Activated CD4-positive, alpha-beta T cell treated with anti-CD3 and anti-CD28 coated beads, Interleukin-2, amount 10 ng/mL, durations not matched to agents 24 days and 14 days (primary cell): ENCODE measurements at regions of chr10 and their contacts with region 1.

Region 1: GRCh38 chr10:104121520-104122224 is at the start of gene SFR1:
- DNase-seq: peak; percentile 100
- H3K4me3 Mint-ChIP-seq: peak within 1 kb of the TSS; percentile 93
- H3K27ac Mint-ChIP-seq: peak within 1 kb of the TSS; percentile 100
- H3K4me1 Mint-ChIP-seq: peaks cover 34% of the 10 kb centered on the region
- H3K27me3 Mint-ChIP-seq: peaks cover 10% of the 10 kb centered on the region
- total RNA-seq, gene SFR1: 12.1 and 13.8 TPM in 2 replicates

Region 2: DNA sequence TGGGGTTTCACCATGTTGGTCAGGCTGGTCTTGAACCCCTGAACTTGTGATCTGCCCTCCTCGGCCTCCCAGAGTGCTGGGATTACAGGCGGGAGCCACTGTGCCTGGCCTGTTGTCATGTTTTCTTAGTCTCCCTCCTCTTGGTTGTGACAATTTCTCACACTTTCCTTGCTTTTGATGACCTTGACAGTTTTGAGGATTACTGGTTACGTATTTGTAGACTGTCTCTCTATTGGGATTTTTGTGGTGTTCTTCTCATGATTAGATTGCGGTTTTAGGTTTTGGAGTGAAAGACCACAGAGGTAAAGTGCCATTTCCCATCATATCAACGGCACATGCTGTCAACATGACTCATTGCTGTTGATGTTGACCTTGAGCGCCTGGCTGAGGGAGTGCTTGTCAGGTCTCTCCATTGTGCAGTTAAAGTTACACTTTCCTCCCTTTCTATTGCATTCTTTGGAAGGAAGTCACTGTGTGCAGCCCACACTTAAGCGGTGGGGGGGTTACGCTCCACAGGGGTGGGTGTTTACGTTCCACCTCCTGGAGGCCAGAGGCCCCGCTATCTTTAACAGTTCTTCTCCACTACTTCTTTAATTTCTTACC is 617.4 kb before region 1 on chr10:
- intact Hi-C with region 1: no loop called
- DNase-seq: peak; percentile 84
- H3K4me3 Mint-ChIP-seq: peak overlapping the region; percentile 53
- H3K27ac Mint-ChIP-seq: peak overlapping the region; percentile 59
- H3K4me1 Mint-ChIP-seq: peaks cover 31% of the 10 kb centered on the region
- H3K27me3 Mint-ChIP-seq: peaks cover 59% of the 10 kb centered on the region

Region 3: DNA sequence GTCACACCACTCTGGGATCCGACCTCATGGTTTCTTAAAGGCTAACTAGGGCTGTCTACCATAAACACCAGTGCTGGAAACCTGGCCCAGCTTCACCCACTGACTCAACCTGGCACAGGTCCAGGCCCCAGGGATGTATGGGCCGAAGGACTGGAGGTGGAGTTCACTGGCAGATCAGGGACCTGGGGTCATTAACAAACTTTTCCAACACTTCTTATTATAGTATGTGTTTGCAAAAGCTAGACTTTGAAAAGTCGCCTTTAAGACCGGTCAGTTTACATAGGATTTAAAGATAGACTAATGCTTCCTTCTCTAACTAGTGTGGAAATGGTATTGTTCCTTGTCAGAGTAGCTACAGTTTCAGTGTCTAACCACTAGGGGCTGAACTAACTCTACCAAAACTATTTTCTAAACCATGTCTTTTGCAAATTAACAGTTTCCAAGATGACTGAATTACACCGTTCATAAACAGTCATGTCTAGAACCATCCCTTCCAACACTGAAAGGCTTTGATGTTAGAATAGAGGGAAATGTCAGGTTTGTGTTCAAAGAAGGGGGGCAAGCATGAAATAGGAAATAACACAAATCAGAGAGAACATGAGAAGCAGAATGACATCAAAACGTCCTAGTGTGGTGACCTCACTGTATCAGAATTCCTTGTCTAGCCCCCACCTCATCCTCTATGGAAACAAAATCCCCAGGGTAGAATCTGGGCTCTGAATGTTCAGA is 233.4 kb before region 1 on chr10:
- intact Hi-C with region 1: loop called (anchors 1 kb)
- DNase-seq: peak; percentile 70
- H3K4me3 Mint-ChIP-seq: no peak overlapping the region
- H3K27ac Mint-ChIP-seq: peak overlapping the region; percentile 76
- H3K4me1 Mint-ChIP-seq: peaks cover 28% of the 10 kb centered on the region
- H3K27me3 Mint-ChIP-seq: no peaks in the 10 kb centered on the region

Region 4: GRCh38 chr10:103918053-103918846 is 203.4 kb before region 1 on chr10 and contains the start of gene STN1:
- intact Hi-C with region 1: loop called (anchors 1 kb)
- DNase-seq: peak; percentile 98
- H3K4me3 Mint-ChIP-seq: peak within 1 kb of the TSS; percentile 97
- H3K27ac Mint-ChIP-seq: peak within 1 kb of the TSS; percentile 97
- H3K4me1 Mint-ChIP-seq: peaks cover 33% of the 10 kb centered on the region
- H3K27me3 Mint-ChIP-seq: no peaks in the 10 kb centered on the region
- total RNA-seq, gene STN1: 23.6 and 24.1 TPM in 2 replicates

Region 5: GRCh38 chr10:104080762-104081161 is 40.9 kb before region 1 on chr10:
- intact Hi-C with region 1: loop called (anchors 5 kb)
- DNase-seq: no peak
- H3K4me3 Mint-ChIP-seq: no peak overlapping the region
- H3K27ac Mint-ChIP-seq: no peak overlapping the region
- H3K4me1 Mint-ChIP-seq: no peaks in the 10 kb centered on the region
- H3K27me3 Mint-ChIP-seq: peaks cover 7% of the 10 kb centered on the region

Region 6: DNA sequence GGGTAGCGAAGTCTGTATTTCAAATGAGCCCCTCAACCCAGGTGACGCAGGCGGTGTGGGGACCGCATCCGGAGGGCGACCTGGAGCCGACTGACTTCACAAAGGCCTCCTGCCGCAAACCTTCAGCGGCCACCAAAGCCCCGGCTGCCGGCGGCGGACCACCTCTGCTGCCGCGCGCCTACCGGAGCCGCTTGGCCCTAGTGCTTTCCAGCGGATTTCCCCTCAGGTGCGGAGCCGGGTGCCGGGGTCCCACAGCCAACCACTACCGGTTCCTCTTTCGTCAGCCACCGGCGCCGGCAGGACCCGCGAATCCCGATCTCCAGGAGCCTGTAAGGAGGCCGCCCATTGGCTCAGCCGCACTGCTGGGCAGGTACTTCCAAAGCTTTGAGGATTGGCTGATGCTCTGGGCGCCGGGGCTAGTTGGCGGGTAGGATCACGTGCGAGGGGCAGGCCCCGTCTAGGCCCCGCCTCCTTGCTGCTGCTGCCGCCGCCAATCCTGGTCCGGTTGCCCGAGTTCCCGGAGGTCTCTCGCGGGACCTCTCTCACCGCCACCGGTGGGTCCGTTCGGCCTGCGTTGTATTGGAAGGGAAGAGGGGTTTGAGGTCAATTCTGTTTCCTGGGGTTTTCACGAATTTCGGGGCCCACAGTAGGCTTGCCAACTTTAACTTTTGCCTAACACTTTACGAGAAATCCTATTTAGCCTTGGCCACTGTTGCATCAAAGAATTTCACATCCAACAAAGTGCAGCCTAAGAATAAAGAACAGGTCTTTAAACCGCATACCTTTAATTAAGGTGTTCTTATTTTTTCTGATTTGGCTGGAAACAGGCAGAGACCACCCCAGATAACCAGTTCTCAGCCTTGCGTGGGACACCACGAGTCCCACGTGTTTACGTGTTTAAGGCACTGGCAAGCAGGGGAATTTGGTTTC is 147.3 kb after region 1 on chr10 and contains the start of gene GSTO2:
- intact Hi-C with region 1: loop called (anchors 1 kb)
- DNase-seq: peak; percentile 99
- H3K4me3 Mint-ChIP-seq: peak within 1 kb of the TSS; percentile 87
- H3K27ac Mint-ChIP-seq: peak within 1 kb of the TSS; percentile 90
- H3K4me1 Mint-ChIP-seq: peaks cover 29% of the 10 kb centered on the region
- H3K27me3 Mint-ChIP-seq: peaks cover 2% of the 10 kb centered on the region
- total RNA-seq, gene GSTO2: 0.77 and 1.3 TPM in 2 replicates

Region 7: DNA sequence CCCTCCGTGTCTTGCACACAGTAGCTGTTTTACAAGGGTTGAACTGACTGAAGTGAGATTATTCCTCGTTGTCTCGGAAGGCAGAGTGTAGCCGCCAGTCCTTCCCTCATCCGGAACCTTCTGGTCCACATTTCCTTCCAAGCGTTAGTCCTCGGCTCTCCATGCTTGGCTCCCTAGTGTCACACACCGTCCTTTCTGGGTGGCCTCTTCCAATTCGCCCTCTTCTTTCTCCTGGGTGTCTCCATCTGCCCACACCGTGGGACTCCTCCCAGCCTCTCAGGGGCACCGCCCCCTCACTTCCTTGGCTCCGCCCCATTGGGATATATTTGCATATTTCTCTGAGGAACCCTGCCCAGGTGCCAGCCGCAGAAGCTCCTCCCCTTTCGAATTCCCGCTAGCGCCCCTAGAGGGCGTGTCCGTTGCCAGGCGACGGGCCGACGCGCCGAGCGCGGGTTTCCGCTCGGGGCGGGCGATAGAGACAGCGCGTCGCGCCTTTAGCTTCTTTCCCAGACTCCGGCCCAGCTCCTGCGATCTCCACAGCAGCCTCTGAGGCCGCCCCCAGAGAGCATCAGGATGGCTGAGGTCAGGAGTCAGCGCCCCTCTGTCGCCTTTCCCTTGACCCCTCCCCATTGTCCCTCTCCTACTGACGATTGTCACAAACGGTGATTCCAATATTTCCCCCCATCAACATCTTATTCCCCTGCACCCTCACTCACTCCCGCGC is 231.8 kb after region 1 on chr10 and contains the start of gene CFAP58:
- intact Hi-C with region 1: loop called (anchors 2 kb)
- DNase-seq: peak; percentile 98
- H3K4me3 Mint-ChIP-seq: no peak within 1 kb of the TSS
- H3K27ac Mint-ChIP-seq: no peak within 1 kb of the TSS
- H3K4me1 Mint-ChIP-seq: peaks cover 13% of the 10 kb centered on the region
- H3K27me3 Mint-ChIP-seq: no peaks in the 10 kb centered on the region
- total RNA-seq, gene CFAP58: 0.16 and 0.19 TPM in 2 replicates